ENCODE measurements at regions of chr1 and their contacts with region 1.

Region 1: GRCh38 chr1:84675105-84675504 is 15.2 kb downstream of the SSX2IP start:
- DNase-seq: no peak
- H3K4me3 Mint-ChIP-seq: no peak overlapping the region
- H3K27ac Mint-ChIP-seq: no peak overlapping the region
- H3K4me1 Mint-ChIP-seq: no peaks in the 10 kb centered on the region
- H3K27me3 Mint-ChIP-seq: no peaks in the 10 kb centered on the region
- CTCF ChIP-seq: no peak

Region 2: GRCh38 chr1:84632137-84632536 is 43.0 kb before region 1 on chr1:
- CTCF ChIA-PET with region 1: no interaction called
- POLR2A ChIA-PET with region 1: no interaction called
- intact Hi-C with region 1: no loop called
- DNase-seq: no peak
- H3K4me3 Mint-ChIP-seq: no peak overlapping the region
- H3K27ac Mint-ChIP-seq: no peak overlapping the region
- H3K4me1 Mint-ChIP-seq: peaks cover 22% of the 10 kb centered on the region
- H3K27me3 Mint-ChIP-seq: no peaks in the 10 kb centered on the region
- CTCF ChIP-seq: no peak

Region 3: GRCh38 chr1:84690397-84691121 is 15.5 kb after region 1 on chr1 and contains the start of gene SSX2IP:
- CTCF ChIA-PET with region 1: interaction called, 7 read pairs
- POLR2A ChIA-PET with region 1: interaction called, 11 read pairs
- intact Hi-C with region 1: no loop called
- DNase-seq: peak; percentile 97
- H3K4me3 Mint-ChIP-seq: peak within 1 kb of the TSS; percentile 97
- H3K27ac Mint-ChIP-seq: peak within 1 kb of the TSS; percentile 83
- H3K4me1 Mint-ChIP-seq: peaks cover 40% of the 10 kb centered on the region
- H3K27me3 Mint-ChIP-seq: no peaks in the 10 kb centered on the region
- CTCF ChIP-seq: no peak
- total RNA-seq, gene SSX2IP: 19.4 and 20.5 TPM in 2 replicates

Region 4: GRCh38 chr1:84834419-84835064 is 159.4 kb after region 1 on chr1:
- CTCF ChIA-PET with region 1: no interaction called
- POLR2A ChIA-PET with region 1: no interaction called
- intact Hi-C with region 1: no loop called
- DNase-seq: peak; percentile 87
- H3K4me3 Mint-ChIP-seq: peak overlapping the region; percentile 2
- H3K27ac Mint-ChIP-seq: peak overlapping the region; percentile 57
- H3K4me1 Mint-ChIP-seq: peaks cover 20% of the 10 kb centered on the region
- H3K27me3 Mint-ChIP-seq: no peaks in the 10 kb centered on the region
- CTCF ChIP-seq: no peak